ENCODE measurements at regions of chr15 and their contacts with region 1.

Region 1: GRCh38 chr15:22780267-22780666 is 6.2 kb upstream of the NIPA1 start:
- DNase-seq: no peak
- ATAC-seq: peak; percentile 68
- H3K4me3 Mint-ChIP-seq: no peak overlapping the region
- H3K27ac Mint-ChIP-seq: peak overlapping the region; percentile 8
- H3K4me1 Mint-ChIP-seq: peaks cover 26% of the 10 kb centered on the region
- H3K27me3 Mint-ChIP-seq: no peaks in the 10 kb centered on the region
- CTCF ChIP-seq: no peak

Region 2: GRCh38 chr15:22795206-22796063 is 15.2 kb after region 1 on chr15:
- CTCF ChIA-PET with region 1: no interaction called
- POLR2A ChIA-PET with region 1: interaction called, 7 read pairs
- intact Hi-C with region 1: loop called (anchors 2 kb)
- DNase-seq: no peak
- ATAC-seq: no peak
- H3K4me3 Mint-ChIP-seq: no peak overlapping the region
- H3K27ac Mint-ChIP-seq: peak overlapping the region; percentile 82
- H3K4me1 Mint-ChIP-seq: peaks cover 72% of the 10 kb centered on the region
- H3K27me3 Mint-ChIP-seq: no peaks in the 10 kb centered on the region
- CTCF ChIP-seq: no peak

Region 3: DNA sequence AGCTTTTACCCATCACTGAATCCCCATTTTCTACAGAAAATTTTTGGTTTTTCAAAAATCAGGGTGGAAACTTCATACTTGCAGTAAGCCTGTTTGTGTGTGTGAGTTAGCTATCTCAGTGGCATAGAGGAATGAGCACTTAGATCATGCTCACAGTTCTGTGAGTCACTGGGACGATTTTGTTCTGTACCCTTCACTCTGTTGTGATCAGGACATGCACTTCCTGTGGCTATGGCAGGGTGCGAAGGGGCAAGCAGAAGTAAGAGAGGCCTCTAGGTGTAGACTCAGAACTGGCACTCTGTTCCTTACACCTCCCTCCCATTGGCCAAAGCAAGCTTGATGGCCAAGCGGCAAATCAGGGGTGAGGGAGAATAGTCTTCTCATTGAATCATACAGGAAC is 69.8 kb after region 1 on chr15:
- CTCF ChIA-PET with region 1: no interaction called
- POLR2A ChIA-PET with region 1: no interaction called
- intact Hi-C with region 1: no loop called
- DNase-seq: no peak
- ATAC-seq: no peak
- H3K4me3 Mint-ChIP-seq: no peak overlapping the region
- H3K27ac Mint-ChIP-seq: peak overlapping the region; percentile 31
- H3K4me1 Mint-ChIP-seq: peaks cover 42% of the 10 kb centered on the region
- H3K27me3 Mint-ChIP-seq: no peaks in the 10 kb centered on the region
- CTCF ChIP-seq: no peak

Region 4: DNA sequence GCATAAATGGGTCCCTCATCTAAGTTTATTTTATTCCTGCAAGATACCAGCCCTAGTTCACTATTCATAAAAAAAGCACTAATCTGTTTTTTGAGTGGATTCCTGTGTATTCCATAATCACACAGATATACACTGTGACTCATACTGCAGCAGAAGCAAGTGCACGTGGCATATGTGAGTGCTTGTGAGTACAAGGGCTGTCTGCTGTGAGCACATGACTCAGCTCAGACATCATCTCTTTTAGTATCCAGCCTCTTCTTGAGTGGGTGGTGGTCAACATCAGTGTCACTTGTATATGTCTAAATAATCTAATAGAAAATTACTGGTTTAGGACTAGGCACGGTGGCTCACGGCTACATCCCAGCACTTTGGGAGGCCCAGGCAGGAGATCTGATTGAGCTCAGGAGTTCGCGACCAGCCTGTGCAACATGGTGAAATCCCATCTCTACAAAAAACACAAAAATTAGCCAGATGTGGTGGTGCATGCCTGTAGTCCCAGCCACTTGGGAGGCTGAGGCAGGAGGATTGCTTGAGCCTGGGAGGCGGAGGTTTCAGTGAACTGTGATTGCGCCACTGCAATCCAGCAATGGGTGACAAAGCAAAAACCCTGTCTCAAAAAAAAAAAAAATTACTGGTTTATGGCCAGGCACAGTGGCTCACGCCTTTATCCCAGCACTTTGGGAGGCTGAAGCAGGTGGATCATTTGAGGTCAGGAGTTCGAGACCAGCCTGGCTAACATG is 108.0 kb after region 1 on chr15:
- CTCF ChIA-PET with region 1: no interaction called
- POLR2A ChIA-PET with region 1: no interaction called
- intact Hi-C with region 1: no loop called
- DNase-seq: no peak
- ATAC-seq: no peak
- H3K4me3 Mint-ChIP-seq: no peak overlapping the region
- H3K27ac Mint-ChIP-seq: no peak overlapping the region
- H3K4me1 Mint-ChIP-seq: no peaks in the 10 kb centered on the region
- H3K27me3 Mint-ChIP-seq: no peaks in the 10 kb centered on the region
- CTCF ChIP-seq: no peak

Measured in activated B cell treated with CpG ODN at 0.5 μM for 24 hours (primary cell).